ENCODE measurements at regions of chr1 and their contacts with region 1.

Region 1: GRCh38 chr1:180080433-180080832 is 74.2 kb upstream of the QSOX1 start:
- DNase-seq: no peak
- H3K4me3 ChIP-seq: no peak overlapping the region
- H3K27ac ChIP-seq: no peak overlapping the region
- H3K4me1 ChIP-seq: no peaks in the 10 kb centered on the region
- H3K27me3 ChIP-seq: no peaks in the 10 kb centered on the region
- CTCF ChIP-seq: no peak
- EP300 ChIP-seq: no peak
- POLR2A ChIP-seq: no peak

Region 2: DNA sequence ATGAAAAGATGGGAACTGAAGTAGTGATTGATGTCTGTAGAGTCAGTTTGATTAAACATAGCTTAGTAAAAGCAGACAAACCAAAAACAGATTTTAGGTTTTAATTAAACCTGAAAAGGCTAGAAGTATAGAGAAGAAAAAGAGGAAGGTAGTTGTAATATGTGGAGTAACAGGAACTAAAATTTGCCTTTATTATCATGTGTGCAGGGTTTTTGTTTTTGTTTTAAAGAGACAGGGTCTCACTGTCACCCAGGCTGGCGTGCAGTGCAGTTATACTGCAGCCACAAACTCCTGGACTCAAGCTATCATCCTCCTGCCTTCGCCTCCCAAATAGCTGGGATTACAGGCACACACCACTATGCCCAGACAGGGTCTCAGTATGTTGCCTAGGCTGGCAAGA is 192.4 kb before region 1 on chr1:
- intact Hi-C with region 1: loop called (anchors 10 kb)
- DNase-seq: no peak
- H3K4me3 ChIP-seq: no peak overlapping the region
- H3K27ac ChIP-seq: no peak overlapping the region
- H3K4me1 ChIP-seq: peaks cover 33 to 67% (median 63%) of the 10 kb centered on the region in 4 donors
- H3K27me3 ChIP-seq: no peaks in the 10 kb centered on the region
- CTCF ChIP-seq: no peak
- EP300 ChIP-seq: no peak
- POLR2A ChIP-seq: no peak

Measured in esophagus muscularis mucosa (tissue), 4 donors.